ENCODE measurements at regions of chr6 and their contacts with region 1.

Region 1: DNA sequence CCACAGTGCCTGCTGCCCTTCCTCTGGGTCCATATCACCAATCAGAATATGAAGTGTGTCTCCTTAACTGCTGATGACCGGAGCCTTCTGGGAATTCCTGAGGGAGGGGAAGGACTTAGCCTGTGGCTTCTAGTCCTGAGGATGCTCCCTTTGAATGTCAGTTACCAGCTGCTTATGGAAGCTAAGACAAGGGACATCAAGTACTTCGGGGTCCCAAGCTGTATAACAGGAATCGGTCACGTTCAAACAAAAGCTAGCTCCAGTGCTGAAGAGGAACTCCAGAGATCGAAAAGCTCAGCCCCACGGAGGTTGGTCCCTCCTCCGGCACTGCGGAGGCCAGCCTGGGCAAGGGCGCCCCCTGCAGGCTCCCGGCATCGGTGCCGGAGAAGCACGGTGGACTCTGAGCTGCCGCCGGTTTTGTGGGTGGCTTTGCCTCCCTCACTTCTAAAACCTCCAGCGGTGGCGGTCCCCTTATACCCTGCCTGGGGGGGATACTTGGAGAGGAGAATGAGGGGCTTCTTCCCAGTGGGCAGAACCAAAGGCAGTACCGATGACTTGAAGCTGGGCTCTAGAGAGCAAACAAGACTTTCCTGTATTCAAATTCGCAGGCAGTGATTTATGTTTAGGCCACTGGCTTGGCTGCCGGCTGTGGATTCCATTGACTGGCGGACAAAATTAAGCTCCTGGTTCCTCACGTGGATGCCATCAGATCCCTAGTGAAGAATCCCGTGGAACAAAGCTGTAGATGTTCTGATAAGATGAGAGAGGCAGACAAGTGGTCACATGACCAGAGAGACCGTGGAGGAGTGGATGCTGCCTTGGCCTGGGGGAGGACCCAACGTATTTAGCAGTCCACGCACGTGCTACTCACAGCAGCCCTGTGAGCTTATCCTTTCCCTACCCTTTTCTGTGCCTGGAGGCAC is 16.2 kb upstream of the UBR2 start:
- DNase-seq: no peak
- H3K4me3 ChIP-seq: peak overlapping the region; percentile 55
- CTCF ChIP-seq: peak; percentile 100

Region 2: DNA sequence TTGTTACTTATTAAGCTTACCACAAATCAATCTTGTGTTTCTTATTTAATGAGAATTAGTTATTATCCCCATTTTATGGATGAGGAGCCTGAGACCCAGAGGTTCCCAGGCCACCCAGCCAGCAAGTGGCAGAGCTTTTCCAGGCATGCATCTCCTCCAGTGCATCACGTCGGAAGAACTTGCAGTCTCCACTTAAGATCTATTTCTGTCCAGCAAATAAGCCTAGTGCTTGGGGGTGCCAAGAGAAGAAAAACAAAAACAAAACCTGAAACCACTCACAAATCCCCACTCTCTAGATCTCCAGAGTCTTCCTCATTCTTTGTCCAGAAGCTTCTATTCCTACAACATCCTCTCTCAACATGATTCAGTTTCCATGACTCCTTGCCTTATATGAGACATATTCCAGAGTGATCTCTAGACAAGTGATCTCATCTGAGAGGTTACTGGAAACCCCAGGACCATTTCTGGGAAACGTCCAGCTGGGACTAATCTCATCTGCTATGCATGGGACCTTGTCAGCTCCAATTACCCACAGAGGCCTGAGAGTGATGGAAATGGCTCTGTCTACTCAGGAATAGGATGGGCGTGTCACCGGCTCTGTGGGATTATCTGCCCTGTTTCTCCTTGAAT is 357.0 kb before region 1 on chr6:
- CTCF ChIA-PET with region 1: interaction called, 11 read pairs
- POLR2A ChIA-PET with region 1: no interaction called
- DNase-seq: peak; percentile 51
- H3K4me3 ChIP-seq: no peak overlapping the region
- CTCF ChIP-seq: no peak

Region 3: GRCh38 chr6:42251911-42252637 is 295.6 kb before region 1 on chr6:
- CTCF ChIA-PET with region 1: interaction called, 11 read pairs
- POLR2A ChIA-PET with region 1: no interaction called
- DNase-seq: no peak
- H3K4me3 ChIP-seq: no peak overlapping the region
- CTCF ChIP-seq: no peak

Region 4: DNA sequence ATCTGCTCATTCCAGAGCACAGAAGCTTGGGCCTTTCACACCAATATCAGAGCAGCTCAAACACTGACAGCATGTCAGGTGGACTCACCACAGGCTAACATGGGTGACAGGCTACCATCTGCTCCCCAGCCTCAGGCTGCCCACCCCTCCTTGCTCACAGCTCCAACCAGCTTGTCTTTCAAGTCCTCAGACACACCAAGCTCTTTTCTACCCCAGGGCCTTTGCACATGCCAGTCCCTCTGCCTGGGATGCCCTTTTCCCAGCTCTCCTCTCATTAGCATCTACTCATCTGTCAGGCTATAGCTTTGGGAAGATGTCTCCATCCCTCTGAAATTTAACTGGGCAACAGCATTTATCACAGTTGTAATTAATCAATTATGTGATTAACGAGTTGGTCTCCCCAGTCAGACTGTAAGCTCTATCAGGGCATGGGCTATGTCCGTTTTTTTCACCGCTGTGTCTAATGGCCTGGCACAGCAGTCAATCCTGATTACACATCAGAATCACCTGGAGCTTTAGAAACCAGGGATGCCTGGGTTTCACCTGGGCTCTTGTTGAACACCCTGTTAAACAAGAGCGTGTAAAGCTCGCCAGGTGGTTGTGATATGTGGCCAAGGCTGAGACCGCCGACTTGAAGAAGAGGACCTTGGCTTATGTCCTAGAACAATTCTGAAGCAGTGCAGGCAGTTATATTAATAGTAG is 241.1 kb before region 1 on chr6:
- CTCF ChIA-PET with region 1: interaction called, 14 read pairs
- POLR2A ChIA-PET with region 1: no interaction called
- DNase-seq: no peak
- H3K4me3 ChIP-seq: no peak overlapping the region
- CTCF ChIP-seq: no peak

Region 5: DNA sequence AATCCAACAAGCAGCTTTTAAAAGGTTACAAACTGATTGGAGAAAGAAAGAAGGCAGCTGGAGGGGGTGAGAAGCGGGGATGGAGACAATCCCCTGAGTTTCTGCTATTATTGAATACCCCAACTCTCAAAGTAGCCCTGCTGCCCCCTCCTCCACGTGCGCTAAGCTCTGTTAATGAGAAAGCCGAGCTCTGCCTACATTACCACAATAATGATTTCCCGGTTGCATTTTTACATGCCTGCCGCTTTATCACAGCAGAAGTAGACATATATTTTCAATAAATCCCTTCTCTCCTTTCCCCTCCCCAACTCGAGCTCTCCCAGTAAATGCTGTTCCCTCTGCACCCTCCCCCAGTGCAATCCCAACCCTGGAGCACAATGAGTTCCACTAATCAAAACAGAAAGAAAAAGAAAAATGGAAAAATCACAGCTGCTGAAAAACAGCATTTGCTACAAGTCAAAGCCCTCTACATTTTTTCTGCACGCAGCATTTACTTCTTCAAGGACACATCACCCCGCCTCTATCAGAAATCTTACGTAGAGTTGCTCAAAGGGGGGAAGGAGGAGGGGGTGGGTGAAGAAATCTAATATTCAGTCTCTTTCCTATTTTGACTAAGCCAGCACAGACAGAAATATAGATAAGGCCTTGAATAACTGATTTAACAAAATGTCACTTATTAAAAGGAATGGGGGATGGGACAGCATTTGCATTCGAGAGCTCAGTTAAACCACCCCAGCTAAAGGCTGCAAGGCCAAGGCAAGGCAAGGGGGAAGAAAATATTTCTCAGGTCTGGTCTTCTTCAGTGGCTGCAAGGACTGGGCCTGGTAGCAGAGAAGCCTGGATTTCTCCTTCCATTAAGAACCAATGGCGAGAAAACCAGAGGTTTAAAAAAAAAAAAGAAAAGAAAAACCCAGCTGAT is 106.6 kb before region 1 on chr6:
- CTCF ChIA-PET with region 1: interaction called, 25 read pairs
- POLR2A ChIA-PET with region 1: interaction called, 4 read pairs
- DNase-seq: no peak
- H3K4me3 ChIP-seq: peak overlapping the region; percentile 24
- CTCF ChIP-seq: no peak

Region 6: DNA sequence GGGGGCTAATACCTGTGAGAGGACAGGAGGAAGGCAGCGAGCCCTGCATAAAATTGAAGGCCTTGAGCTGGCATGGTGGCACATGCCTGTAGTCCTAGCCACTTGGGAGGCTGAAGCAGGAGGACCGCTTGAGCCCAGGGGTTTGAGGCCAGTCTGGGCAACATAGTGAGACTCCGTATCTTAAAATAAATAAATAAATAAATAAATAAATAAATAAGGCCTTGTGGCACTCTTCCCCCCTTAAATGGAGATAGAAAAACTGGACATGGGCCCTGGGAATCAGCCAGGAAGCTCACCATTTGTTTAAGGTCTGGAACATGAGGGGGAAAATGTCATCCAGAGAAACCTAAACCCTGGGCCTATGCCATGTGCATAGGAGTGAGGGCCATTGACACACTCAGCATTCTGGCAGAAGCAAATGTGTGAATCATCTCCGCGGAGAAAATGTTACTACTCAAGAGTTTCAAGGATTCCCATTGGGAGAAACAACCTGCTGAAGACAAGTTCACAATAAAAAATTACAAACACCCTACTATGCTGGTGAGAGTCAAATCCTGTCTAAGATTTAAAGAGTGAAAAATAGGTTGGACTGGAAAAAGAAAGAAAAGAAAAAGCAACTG is 35.8 kb before region 1 on chr6:
- CTCF ChIA-PET with region 1: interaction called, 29 read pairs
- POLR2A ChIA-PET with region 1: no interaction called
- DNase-seq: no peak
- H3K4me3 ChIP-seq: no peak overlapping the region
- CTCF ChIP-seq: no peak

Region 7: DNA sequence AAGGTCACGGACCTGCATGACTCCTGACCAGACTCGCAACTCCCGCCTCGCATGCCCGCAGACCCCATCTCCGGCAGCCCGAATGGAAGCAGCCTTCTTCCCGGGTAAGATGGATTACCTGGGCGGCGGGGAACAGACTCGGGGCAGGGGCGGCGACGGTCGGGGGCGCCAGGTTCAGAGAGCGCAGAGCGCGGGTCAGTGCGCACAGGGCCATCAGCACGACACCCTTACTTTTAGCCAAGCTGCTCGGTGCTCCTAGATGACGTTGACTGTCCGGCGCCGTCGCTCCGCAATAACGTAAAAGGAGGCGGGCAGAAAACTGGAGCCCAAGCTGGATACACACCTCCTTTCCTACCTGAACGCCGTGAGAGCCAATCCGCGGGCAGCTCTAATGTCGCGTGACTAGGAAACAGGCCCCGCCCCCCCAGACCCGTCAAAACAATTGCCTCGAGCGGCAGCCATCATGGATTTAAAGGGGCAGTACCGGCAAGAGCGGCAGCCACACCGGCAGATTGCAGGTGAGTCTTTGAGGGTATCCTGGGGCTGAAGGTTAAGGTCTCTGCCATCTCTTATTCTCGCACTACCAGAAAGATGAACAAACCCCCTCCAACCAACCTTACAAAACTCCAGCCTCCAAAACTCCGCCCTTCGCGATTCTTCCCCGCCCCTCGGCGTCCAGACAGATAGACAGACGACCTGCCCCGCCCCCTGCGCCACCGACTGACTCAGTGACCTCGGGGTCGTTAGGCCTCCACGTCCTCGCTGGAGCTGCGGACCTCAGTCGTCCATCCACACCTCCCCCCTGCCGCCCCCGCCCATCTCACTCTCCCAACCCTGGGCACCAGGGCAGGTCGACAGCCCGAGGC is 511.7 kb after region 1 on chr6 and contains the starts of genes KLC4 and MRPL2:
- CTCF ChIA-PET with region 1: no interaction called
- POLR2A ChIA-PET with region 1: no interaction called
- DNase-seq: peak; percentile 90
- H3K4me3 ChIP-seq: peak within 1 kb of the TSS; percentile 98
- CTCF ChIP-seq: no peak

Measured in AG04449 (cell line).